ENCODE measurements at regions of chr4 and their contacts with region 1.

Region 1: GRCh38 chr4:169485791-169486742 is 126.3 kb downstream of the NEK1 start:
- DNase-seq: peak; percentile 36
- ATAC-seq: peak; percentile 67
- H3K4me3 ChIP-seq: 0 out of 6 replicates have a peak overlapping the region, but pooled peaks of 1 of the 3 experiments have one; percentile 3
- H3K27ac ChIP-seq: no peak overlapping the region
- H3K4me1 ChIP-seq: peaks cover 5% of the 10 kb centered on the region; the same call in 1 of the 2 replicates
- H3K27me3 ChIP-seq: no peaks in the 10 kb centered on the region
- CTCF ChIP-seq: peak; percentile 83
- EP300 ChIP-seq: no peak
- POLR2A ChIP-seq: no peak
- RAD21 ChIP-seq: peak; percentile 59

Region 2: DNA sequence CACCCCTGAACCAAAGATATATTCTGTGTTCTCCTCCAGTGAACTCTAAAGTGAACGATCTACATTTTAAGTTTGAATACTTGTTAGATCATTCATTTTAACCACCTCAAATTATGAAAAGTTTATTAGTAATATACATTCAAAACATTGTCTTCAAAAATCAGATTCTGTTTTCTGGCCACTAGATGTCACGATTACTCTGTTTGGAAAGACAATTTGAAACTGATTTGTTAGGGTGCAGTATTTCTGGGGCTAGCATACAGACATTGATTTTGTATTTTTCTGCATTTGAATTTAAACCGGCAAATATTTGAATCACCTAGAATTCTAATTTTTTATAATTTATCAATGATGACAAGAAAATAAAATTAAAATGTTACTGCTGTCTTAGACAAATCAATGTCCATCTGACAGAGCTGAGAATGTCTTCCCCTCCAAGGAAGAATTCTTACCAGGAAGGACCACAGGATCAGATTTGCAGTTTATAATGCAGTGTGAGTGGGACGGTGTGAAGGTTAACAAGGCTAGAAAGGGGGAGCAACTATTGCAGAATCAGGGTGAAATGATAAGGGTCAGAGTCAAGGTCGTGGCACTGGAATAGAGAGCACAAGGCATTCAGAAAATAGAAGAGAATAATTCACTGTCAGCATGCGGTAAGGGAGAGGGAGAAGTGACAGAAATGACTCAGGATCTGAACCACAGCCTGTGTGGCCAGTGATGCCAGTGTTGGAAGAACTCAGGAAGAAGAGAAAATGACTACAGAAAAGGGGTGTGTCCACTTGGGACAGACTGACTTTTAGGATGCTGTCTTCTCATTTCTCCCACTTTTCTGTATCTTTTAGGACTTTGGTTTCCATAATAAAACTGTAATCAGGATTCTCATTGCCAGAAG is 1302.1 kb before region 1 on chr4:
- CTCF ChIA-PET with region 1: no interaction called
- POLR2A ChIA-PET with region 1: no interaction called
- in situ Hi-C with region 1: loop called (anchors 25 kb)
- intact Hi-C with region 1: loop called (anchors 2 kb)
- DNase-seq: peak; percentile 14
- ATAC-seq: no peak
- H3K4me3 ChIP-seq: no peak overlapping the region
- H3K27ac ChIP-seq: no peak overlapping the region
- H3K4me1 ChIP-seq: no peaks in the 10 kb centered on the region
- H3K27me3 ChIP-seq: no peaks in the 10 kb centered on the region
- CTCF ChIP-seq: peak; percentile 60
- EP300 ChIP-seq: no peak
- POLR2A ChIP-seq: no peak
- RAD21 ChIP-seq: no peak

Region 3: GRCh38 chr4:168585168-168586091 is 900.6 kb before region 1 on chr4:
- CTCF ChIA-PET with region 1: no interaction called
- POLR2A ChIA-PET with region 1: no interaction called
- in situ Hi-C with region 1: no loop called
- intact Hi-C with region 1: loop called (anchors 10 kb)
- DNase-seq: peak; percentile 20
- ATAC-seq: peak; percentile 100
- H3K4me3 ChIP-seq: no peak overlapping the region
- H3K27ac ChIP-seq: no peak overlapping the region
- H3K4me1 ChIP-seq: no peaks in the 10 kb centered on the region
- H3K27me3 ChIP-seq: peaks cover 0 to 3% of the 10 kb centered on the region in 2 experiments; a peak in 1 of 5 replicates
- CTCF ChIP-seq: peak; percentile 65
- EP300 ChIP-seq: no peak
- POLR2A ChIP-seq: no peak
- RAD21 ChIP-seq: peak; percentile 46; the same call in 1 of the 2 replicates

Region 4: DNA sequence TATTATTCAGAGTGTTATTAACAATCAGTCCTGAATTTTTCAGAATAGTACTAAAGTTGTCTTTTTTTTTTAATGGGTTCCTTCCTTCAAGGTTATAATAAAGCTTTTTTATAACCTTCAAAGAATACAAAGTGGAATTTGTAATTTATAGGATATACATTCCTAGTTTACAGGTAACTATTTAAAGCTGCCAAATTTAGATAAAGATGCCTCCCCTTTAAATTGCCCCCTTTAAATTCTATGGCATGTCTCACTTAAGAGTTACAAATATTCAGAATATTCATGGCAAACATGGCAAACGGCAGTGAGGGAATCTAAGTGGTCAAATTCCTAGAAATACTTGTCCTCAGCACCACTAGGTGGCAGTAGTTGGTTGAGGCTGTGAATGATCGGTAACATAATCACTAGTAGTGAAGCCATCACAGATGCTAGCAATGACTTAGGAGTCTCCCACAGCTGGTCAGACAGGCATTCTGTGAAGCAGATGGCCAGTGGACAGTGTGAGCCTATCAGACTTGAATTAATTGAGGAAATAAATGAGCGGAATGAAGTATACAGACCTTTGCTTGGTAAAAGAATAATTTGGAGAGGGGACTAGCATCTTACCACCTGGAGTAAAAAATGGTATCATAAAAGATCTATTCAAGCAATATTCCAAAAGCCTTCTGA is 562.4 kb before region 1 on chr4:
- CTCF ChIA-PET with region 1: interaction called, 16 read pairs
- POLR2A ChIA-PET with region 1: no interaction called
- in situ Hi-C with region 1: loop called (anchors 10 kb)
- intact Hi-C with region 1: loop called (anchors 1 kb)
- DNase-seq: peak; percentile 62
- ATAC-seq: peak; percentile 76
- H3K4me3 ChIP-seq: no peak overlapping the region
- H3K27ac ChIP-seq: no peak overlapping the region
- H3K4me1 ChIP-seq: peaks cover 30% of the 10 kb centered on the region
- H3K27me3 ChIP-seq: no peaks in the 10 kb centered on the region
- CTCF ChIP-seq: peak; percentile 89
- EP300 ChIP-seq: no peak
- POLR2A ChIP-seq: no peak
- RAD21 ChIP-seq: peak; percentile 72

Region 5: GRCh38 chr4:169024762-169025161 is 461.3 kb before region 1 on chr4:
- CTCF ChIA-PET with region 1: interaction called, 5 read pairs
- POLR2A ChIA-PET with region 1: no interaction called
- in situ Hi-C with region 1: no loop called
- intact Hi-C with region 1: loop called (anchors 1 kb)
- DNase-seq: no peak
- ATAC-seq: peak; percentile 82
- H3K4me3 ChIP-seq: no peak overlapping the region
- H3K27ac ChIP-seq: no peak overlapping the region
- H3K4me1 ChIP-seq: peaks cover under 1% of the 10 kb centered on the region; the same call in 1 of the 2 replicates
- H3K27me3 ChIP-seq: no peaks in the 10 kb centered on the region
- CTCF ChIP-seq: peak; percentile 78
- EP300 ChIP-seq: no peak
- POLR2A ChIP-seq: no peak
- RAD21 ChIP-seq: peak; percentile 39; the same call in 1 of the 2 replicates

Region 6: DNA sequence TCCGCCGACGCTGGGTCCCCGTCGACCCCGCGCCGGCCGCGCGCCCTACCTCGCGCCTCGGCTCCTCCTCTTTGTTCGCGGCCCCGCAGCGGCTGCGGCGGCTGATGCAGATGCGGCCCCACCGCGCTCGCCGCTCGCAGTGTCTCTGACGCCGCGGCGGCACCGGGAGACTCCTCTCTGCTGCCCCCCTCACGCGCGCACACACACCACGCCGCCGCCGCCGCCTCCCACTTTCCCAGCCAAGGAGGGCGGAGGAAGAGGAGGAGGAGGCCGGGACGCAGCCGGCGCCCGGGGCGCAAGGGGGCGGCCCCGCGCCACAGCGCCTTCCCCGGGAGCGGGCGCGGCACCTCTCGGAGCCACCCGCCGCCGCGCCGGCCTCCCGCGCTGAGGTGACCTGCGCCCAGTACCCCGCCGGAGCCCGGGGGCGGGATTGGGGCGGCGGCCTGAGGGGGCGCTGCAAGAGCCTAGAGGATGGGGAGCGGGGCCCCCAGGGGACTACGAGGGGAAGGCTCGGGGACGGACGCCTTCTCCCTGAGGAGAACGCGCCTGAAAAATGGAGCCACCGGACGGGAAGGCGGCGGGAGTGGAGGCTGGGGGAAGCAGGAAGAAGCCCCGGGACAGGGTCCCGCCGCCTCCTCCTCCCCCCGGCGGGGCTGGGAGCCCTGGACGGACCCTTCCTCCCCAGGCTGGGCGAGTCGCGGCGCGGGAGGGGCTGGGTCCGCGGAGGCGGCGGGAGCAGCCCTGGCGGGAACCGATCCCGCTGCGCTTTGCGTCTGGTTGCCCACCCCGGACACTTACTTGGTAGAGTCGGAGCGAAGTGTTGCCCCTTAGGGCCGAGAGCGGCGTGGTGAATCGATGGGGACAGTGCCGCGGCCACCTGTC is 215.0 kb before region 1 on chr4 and contains the start of gene SH3RF1:
- CTCF ChIA-PET with region 1: no interaction called
- POLR2A ChIA-PET with region 1: no interaction called
- in situ Hi-C with region 1: no loop called
- intact Hi-C with region 1: loop called (anchors 1 kb)
- DNase-seq: peak; percentile 38
- ATAC-seq: peak; percentile 86
- H3K4me3 ChIP-seq: peak within 1 kb of the TSS; percentile 73 to 94 (median 84)
- H3K27ac ChIP-seq: peak within 1 kb of the TSS; percentile 55
- H3K4me1 ChIP-seq: peaks cover 49% of the 10 kb centered on the region
- H3K27me3 ChIP-seq: peaks cover 0 to 4% of the 10 kb centered on the region in 2 experiments; a peak in 1 of 5 replicates
- CTCF ChIP-seq: peak; percentile 48
- EP300 ChIP-seq: no peak
- POLR2A ChIP-seq: peak in 1 of 2 experiments; percentile 45; a peak in 1 of 4 replicates
- RAD21 ChIP-seq: peak; percentile 71
- total RNA-seq, gene SH3RF1: 3.2 and 3.8 TPM in 2 replicates

Measured in HepG2 (cell line).